ENCODE measurements at regions of chr13 and their contacts with region 1.

Region 1: DNA sequence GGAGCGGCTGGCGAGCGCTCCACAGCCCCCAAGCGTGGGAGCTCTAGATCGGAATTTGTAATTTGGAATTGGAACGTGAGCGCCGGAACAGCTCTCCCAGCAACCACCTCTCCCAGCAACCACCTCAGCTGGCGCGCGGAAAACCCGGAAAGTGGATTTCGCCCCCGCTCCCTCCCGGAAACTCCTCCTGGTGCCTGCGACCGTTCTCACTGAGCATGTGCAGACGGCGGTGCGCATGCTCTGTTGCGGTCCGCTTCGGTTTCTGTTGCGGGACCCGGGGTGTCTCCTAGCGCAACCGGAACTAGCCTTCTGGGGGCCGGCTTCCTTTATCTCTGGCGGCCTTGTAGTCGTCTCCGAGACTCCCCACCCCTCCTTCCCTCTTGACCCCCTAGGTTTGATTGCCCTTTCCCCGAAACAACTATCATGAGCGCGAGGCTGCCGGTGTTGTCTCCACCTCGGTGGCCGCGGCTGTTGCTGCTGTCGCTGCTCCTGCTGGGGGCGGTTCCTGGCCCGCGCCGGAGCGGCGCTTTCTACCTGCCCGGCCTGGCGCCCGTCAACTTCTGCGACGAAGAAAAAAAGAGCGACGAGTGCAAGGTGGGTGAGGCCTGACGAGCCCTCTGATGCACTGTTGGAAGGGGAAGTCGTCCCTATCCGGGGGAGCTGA is at the start of gene TM9SF2:
- DNase-seq: peak; percentile 97
- ATAC-seq: peak; percentile 69
- H3K4me3 Mint-ChIP-seq: peak within 1 kb of the TSS; percentile 96
- H3K27ac Mint-ChIP-seq: peak within 1 kb of the TSS; percentile 97
- H3K4me1 Mint-ChIP-seq: peaks cover 68% of the 10 kb centered on the region
- H3K27me3 Mint-ChIP-seq: no peaks in the 10 kb centered on the region
- total RNA-seq, gene TM9SF2: 51.8 to 53.4 TPM

Region 2: DNA sequence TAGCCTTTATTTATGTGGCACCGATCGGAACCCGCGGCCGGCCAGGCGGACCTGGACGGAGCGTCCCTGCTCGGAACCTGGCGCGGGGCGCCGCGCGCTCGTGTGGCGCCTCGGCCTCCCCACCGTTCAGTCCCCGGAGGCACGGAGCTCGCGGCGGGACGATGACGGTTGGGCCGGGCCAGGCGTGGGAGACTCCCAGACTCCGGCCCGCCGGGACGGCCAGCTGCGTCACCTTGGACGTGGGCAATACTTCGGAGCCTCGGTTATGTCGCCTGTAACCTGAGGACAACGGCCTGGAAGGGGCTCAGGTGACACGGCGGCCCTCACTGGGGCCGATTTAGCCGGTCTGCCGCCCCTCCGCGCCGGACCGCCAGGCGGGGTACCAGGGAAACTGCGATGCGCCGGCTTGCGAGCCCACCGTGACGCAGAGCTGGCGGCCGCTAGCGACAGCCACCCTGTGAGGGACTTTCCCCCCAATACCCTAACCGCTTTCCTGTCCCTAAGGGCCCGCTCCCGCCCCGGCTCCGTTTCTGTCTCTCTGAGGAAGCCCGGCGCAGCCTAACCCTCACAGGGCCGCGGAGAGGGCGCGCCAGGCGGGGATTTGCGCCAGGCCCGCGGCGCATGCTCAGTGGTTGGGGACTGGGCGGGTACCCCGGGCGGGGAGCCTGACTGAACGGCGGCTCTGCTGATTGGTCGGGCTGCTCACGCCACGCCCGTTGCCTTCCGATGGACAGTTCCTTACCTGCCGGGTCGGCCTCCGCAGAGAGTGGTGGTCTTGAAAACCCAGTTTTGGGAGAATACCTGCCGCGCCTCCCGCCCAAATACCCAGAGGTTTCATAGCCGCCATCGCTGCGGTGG is 414.0 kb before region 1 on chr13:
- CTCF ChIA-PET with region 1: no interaction called
- POLR2A ChIA-PET with region 1: no interaction called
- intact Hi-C with region 1: loop called in 1 of 2 experiments (anchors 1 kb)
- DNase-seq: peak; percentile 96
- ATAC-seq: peak; percentile 89
- H3K4me3 Mint-ChIP-seq: peak overlapping the region; percentile 89
- H3K27ac Mint-ChIP-seq: peak overlapping the region; percentile 95
- H3K4me1 Mint-ChIP-seq: peaks cover 31% of the 10 kb centered on the region
- H3K27me3 Mint-ChIP-seq: no peaks in the 10 kb centered on the region

Region 3: GRCh38 chr13:99296398-99296797 is 204.9 kb before region 1 on chr13:
- CTCF ChIA-PET with region 1: no interaction called
- POLR2A ChIA-PET with region 1: interaction called, 3 read pairs
- intact Hi-C with region 1: loop called in 1 of 2 experiments (anchors 5 kb)
- DNase-seq: no peak
- ATAC-seq: peak; percentile 54
- H3K4me3 Mint-ChIP-seq: peak overlapping the region; percentile 58
- H3K27ac Mint-ChIP-seq: peak overlapping the region; percentile 96
- H3K4me1 Mint-ChIP-seq: peaks cover 86% of the 10 kb centered on the region
- H3K27me3 Mint-ChIP-seq: no peaks in the 10 kb centered on the region

Region 4: GRCh38 chr13:99380921-99381645 is 120.2 kb before region 1 on chr13:
- CTCF ChIA-PET with region 1: no interaction called
- POLR2A ChIA-PET with region 1: no interaction called
- intact Hi-C with region 1: loop called (anchors 2 to 5 kb)
- DNase-seq: peak; percentile 89
- ATAC-seq: peak; percentile 78
- H3K4me3 Mint-ChIP-seq: no peak overlapping the region
- H3K27ac Mint-ChIP-seq: peak overlapping the region; percentile 96
- H3K4me1 Mint-ChIP-seq: peaks cover 89% of the 10 kb centered on the region
- H3K27me3 Mint-ChIP-seq: no peaks in the 10 kb centered on the region

Region 5: DNA sequence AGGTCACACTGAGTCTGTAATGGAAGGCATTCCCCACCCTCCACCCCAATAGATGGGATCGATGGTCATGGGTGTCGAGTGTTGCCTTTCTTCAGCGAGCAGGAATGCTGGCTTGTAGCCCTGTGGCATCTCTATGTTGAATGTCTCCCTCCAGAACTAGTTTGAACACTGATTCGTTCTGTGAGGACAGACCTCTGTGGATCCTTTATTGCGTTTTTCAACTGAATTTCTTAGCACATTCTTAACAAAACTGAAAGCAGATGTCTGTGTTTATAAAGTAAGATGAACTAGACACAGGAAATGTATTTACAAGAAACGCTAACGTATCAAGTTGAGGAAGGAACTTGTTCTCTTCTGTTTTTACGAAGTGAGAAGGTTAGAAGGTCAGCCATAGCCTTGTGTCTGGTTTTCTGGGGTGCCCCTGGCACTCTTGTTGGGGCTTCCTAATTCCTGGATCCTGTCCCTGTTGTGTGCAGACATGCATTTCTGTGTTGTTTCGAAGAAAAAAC is 36.8 kb before region 1 on chr13:
- CTCF ChIA-PET with region 1: interaction called, 19 read pairs
- POLR2A ChIA-PET with region 1: no interaction called
- intact Hi-C with region 1: loop called in 1 of 2 experiments (anchors 2 kb)
- DNase-seq: no peak
- ATAC-seq: peak; percentile 84
- H3K4me3 Mint-ChIP-seq: peak overlapping the region; percentile 20
- H3K27ac Mint-ChIP-seq: peak overlapping the region; percentile 89
- H3K4me1 Mint-ChIP-seq: peaks cover 30% of the 10 kb centered on the region
- H3K27me3 Mint-ChIP-seq: peaks cover 3% of the 10 kb centered on the region

Region 6: GRCh38 chr13:99606324-99607066 is 105.2 kb after region 1 on chr13:
- CTCF ChIA-PET with region 1: interaction called, 9 read pairs
- POLR2A ChIA-PET with region 1: no interaction called
- intact Hi-C with region 1: loop called (anchors 1 kb)
- DNase-seq: peak; percentile 95
- ATAC-seq: peak; percentile 89
- H3K4me3 Mint-ChIP-seq: peak within 1 kb of the TSS; percentile 83
- H3K27ac Mint-ChIP-seq: peak within 1 kb of the TSS; percentile 81
- H3K4me1 Mint-ChIP-seq: peaks cover 42% of the 10 kb centered on the region
- H3K27me3 Mint-ChIP-seq: no peaks in the 10 kb centered on the region

Region 7: DNA sequence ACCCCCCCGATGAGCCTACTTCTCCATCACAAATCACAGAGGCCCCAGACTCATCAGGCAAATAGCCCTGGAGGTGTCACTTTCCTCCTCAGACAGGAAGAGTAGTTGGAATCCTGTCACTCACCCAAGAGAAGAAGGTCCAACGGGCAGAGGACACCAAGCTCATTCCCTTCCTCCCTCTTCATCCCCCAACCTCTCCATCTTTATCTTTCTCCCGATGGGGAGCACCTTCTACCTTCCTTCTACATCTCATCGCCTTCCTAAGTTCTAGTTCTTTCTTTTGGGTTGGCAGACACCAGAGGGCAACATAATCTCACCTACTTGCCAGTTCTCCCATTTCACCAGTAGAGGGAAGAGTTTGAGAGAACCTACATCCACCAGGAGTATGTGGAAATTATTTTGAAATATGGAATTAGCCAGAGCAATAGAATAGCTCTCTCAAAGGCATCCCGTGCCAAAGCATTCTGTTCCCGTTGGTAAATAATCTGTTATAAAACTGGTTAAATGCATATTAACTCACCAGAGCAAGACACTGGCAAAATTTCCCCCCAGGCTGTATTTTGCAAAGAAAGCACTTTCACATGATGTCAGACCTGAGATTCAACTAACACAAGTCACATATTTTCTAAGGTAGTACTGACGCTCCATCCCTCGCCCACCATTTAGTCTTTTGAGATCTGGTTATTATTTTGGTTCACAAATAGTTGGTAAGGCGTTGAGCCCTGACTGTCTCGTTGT is 415.2 kb after region 1 on chr13:
- CTCF ChIA-PET with region 1: no interaction called
- POLR2A ChIA-PET with region 1: no interaction called
- intact Hi-C with region 1: no loop called
- DNase-seq: peak; percentile 21
- ATAC-seq: peak; percentile 83
- H3K4me3 Mint-ChIP-seq: no peak overlapping the region
- H3K27ac Mint-ChIP-seq: no peak overlapping the region
- H3K4me1 Mint-ChIP-seq: peaks cover 8% of the 10 kb centered on the region
- H3K27me3 Mint-ChIP-seq: peaks cover 10% of the 10 kb centered on the region

Region 8: GRCh38 chr13:100674848-100675660 is 1173.7 kb after region 1 on chr13:
- CTCF ChIA-PET with region 1: no interaction called
- POLR2A ChIA-PET with region 1: no interaction called
- intact Hi-C with region 1: loop called in 1 of 2 experiments (anchors 1 kb)
- DNase-seq: peak; percentile 99
- ATAC-seq: peak; percentile 96
- H3K4me3 Mint-ChIP-seq: peak overlapping the region; percentile 77
- H3K27ac Mint-ChIP-seq: peak overlapping the region; percentile 83
- H3K4me1 Mint-ChIP-seq: peaks cover 23% of the 10 kb centered on the region
- H3K27me3 Mint-ChIP-seq: peaks cover 7% of the 10 kb centered on the region

Measured in activated CD4-positive, alpha-beta T cell treated with anti-CD3 and anti-CD28 coated beads for 36 hours (primary cell).